ENCODE measurements at regions of chr10 and their contacts with region 1.

Region 1: DNA sequence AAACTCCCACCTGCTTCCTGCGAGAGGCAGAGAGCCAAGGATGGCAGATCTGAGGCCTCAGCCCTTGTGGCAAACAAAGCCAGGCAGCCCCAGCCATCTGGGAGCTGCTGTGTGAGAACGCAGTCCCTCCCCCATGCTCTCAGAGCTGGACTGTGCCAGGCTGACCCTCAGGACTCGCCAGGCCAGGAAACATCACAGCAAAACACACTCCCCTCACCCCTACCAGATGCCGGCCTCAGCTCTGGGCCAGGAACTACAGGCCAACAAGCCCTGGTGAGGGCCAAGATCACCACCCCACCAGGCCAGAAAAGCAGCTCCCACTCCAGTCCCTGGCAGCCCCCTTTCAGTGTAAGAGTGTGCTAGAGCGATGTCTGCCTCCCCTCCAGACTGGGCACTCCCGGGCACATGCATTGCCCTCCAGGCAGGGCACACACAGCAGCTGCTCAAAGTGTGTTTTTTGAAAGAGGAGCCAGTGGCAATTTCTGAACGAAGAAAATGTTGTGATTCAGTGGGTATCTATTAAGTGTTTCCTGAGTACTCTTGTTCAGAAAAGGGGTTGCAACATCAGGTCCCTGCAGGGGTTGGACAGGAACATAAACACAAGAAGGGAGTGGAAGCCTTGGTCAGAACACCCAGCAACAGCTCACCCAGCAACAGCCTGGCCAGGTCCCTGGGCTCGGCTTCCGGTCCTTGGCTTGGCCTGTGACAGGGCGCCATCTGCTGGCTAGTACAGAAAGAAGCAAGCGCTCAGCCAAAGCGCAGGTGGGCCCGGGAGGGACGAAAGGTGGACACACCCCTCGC is 18.3 kb downstream of the LRRC20 start:
- DNase-seq: peak; percentile 94 to 97
- H3K4me3 ChIP-seq: no peak overlapping the region
- H3K4me3 Mint-ChIP-seq: no peak overlapping the region
- H3K27ac Mint-ChIP-seq: peak overlapping the region; percentile 33
- H3K4me1 ChIP-seq: peaks cover 16% of the 10 kb centered on the region
- H3K4me1 Mint-ChIP-seq: peaks cover 28% of the 10 kb centered on the region
- H3K27me3 ChIP-seq: no peaks in the 10 kb centered on the region
- H3K27me3 Mint-ChIP-seq: no peaks in the 10 kb centered on the region
- CTCF ChIP-seq: peak; percentile 98 to 99

Region 2: DNA sequence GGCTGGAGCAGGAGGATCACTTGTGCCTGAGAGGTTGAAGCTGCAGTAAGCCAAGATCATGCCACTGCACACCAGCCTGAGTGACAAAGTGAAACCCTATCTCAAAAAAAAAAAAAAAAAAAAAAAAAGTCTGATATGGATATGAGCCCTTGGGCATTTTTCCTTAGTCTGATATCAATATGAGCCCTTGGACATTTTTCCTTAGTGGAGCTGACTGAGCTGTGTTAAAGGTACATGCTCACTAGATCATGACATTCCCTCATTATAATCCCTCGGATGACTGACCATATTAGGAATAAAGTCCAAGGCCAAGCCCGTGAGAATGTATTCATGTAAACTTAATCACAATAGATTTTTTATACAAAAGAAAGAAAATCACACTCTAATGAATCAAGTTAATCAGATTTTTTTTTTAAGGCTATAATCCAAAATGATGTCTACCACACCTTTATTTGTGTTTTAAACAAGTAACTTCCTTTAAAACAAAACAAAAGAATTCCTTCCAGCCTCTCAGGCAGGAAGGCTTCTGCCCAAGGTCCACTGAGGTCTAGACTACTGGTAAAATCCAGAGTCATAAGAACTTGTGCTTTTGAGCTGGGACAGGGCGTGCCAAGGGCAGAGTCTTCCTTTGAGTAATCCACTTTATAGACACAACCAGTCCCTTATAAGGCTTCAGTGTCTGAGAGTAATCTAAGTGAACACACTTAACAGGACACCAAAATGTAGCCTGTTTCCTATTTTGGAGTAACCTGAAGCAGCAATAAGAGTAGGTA is 136.4 kb before region 1 on chr10:
- CTCF ChIA-PET with region 1: interaction called, 284 read pairs
- POLR2A ChIA-PET with region 1: interaction called, 5 read pairs
- intact Hi-C with region 1: no loop called
- DNase-seq: no peak
- H3K4me3 ChIP-seq: no peak overlapping the region
- H3K4me3 Mint-ChIP-seq: no peak overlapping the region
- H3K27ac Mint-ChIP-seq: no peak overlapping the region
- H3K4me1 ChIP-seq: peaks cover 16% of the 10 kb centered on the region
- H3K4me1 Mint-ChIP-seq: peaks cover 19% of the 10 kb centered on the region
- H3K27me3 ChIP-seq: no peaks in the 10 kb centered on the region
- H3K27me3 Mint-ChIP-seq: no peaks in the 10 kb centered on the region
- CTCF ChIP-seq: no peak

Region 3: GRCh38 chr10:70233109-70233938 is 130.8 kb before region 1 on chr10 and contains the start of gene PPA1:
- CTCF ChIA-PET with region 1: interaction called, 36 read pairs
- POLR2A ChIA-PET with region 1: interaction called, 6 read pairs
- intact Hi-C with region 1: loop called (anchors 1 kb)
- DNase-seq: peak; percentile 99 to 100
- H3K4me3 ChIP-seq: peak within 1 kb of the TSS; percentile 85
- H3K4me3 Mint-ChIP-seq: peak within 1 kb of the TSS; percentile 76
- H3K27ac Mint-ChIP-seq: peak within 1 kb of the TSS; percentile 99
- H3K4me1 ChIP-seq: peaks cover 19% of the 10 kb centered on the region
- H3K4me1 Mint-ChIP-seq: peaks cover 19% of the 10 kb centered on the region
- H3K27me3 ChIP-seq: no peaks in the 10 kb centered on the region
- H3K27me3 Mint-ChIP-seq: no peaks in the 10 kb centered on the region
- CTCF ChIP-seq: peak; percentile 56 to 81
- total RNA-seq, gene PPA1: 350 and 353 TPM in 2 replicates

Region 4: GRCh38 chr10:70272925-70273316 is 91.2 kb before region 1 on chr10:
- CTCF ChIA-PET with region 1: interaction called, 25 read pairs
- POLR2A ChIA-PET with region 1: no interaction called
- intact Hi-C with region 1: no loop called
- DNase-seq: no peak
- H3K4me3 ChIP-seq: no peak overlapping the region
- H3K4me3 Mint-ChIP-seq: no peak overlapping the region
- H3K27ac Mint-ChIP-seq: no peak overlapping the region
- H3K4me1 ChIP-seq: no peaks in the 10 kb centered on the region; the same call in 1 of the 2 replicates
- H3K4me1 Mint-ChIP-seq: no peaks in the 10 kb centered on the region
- H3K27me3 ChIP-seq: no peaks in the 10 kb centered on the region; the same call in 1 of the 2 replicates
- H3K27me3 Mint-ChIP-seq: no peaks in the 10 kb centered on the region
- CTCF ChIP-seq: peak; percentile 50 to 68

Region 5: GRCh38 chr10:70324339-70324861 is 39.8 kb before region 1 on chr10:
- CTCF ChIA-PET with region 1: interaction called, 28 read pairs
- POLR2A ChIA-PET with region 1: no interaction called
- intact Hi-C with region 1: loop called (anchors 1 kb)
- DNase-seq: peak in 1 of 2 experiments; percentile 31
- H3K4me3 ChIP-seq: no peak overlapping the region
- H3K4me3 Mint-ChIP-seq: no peak overlapping the region
- H3K27ac Mint-ChIP-seq: peak overlapping the region; percentile 24
- H3K4me1 ChIP-seq: peaks cover 22% of the 10 kb centered on the region
- H3K4me1 Mint-ChIP-seq: peaks cover 21% of the 10 kb centered on the region
- H3K27me3 ChIP-seq: no peaks in the 10 kb centered on the region
- H3K27me3 Mint-ChIP-seq: no peaks in the 10 kb centered on the region
- CTCF ChIP-seq: no peak

Region 6: GRCh38 chr10:70331486-70332268 is 32.5 kb before region 1 on chr10:
- CTCF ChIA-PET with region 1: interaction called, 7 read pairs
- POLR2A ChIA-PET with region 1: no interaction called
- intact Hi-C with region 1: loop called (anchors 1 kb)
- DNase-seq: peak in 1 of 2 experiments; percentile 30
- H3K4me3 ChIP-seq: no peak overlapping the region
- H3K4me3 Mint-ChIP-seq: no peak overlapping the region
- H3K27ac Mint-ChIP-seq: no peak overlapping the region
- H3K4me1 ChIP-seq: no peaks in the 10 kb centered on the region
- H3K4me1 Mint-ChIP-seq: peaks cover under 1% of the 10 kb centered on the region
- H3K27me3 ChIP-seq: no peaks in the 10 kb centered on the region
- H3K27me3 Mint-ChIP-seq: no peaks in the 10 kb centered on the region
- CTCF ChIP-seq: peak; percentile 32 to 38

Region 7: GRCh38 chr10:70391654-70392053 is 27.5 kb after region 1 on chr10:
- CTCF ChIA-PET with region 1: interaction called, 48 read pairs
- POLR2A ChIA-PET with region 1: interaction called, 4 read pairs
- intact Hi-C with region 1: loop called (anchors 1 kb)
- DNase-seq: no peak
- H3K4me3 ChIP-seq: no peak overlapping the region
- H3K4me3 Mint-ChIP-seq: no peak overlapping the region
- H3K27ac Mint-ChIP-seq: no peak overlapping the region
- H3K4me1 ChIP-seq: peaks cover 4% of the 10 kb centered on the region; the same call in 1 of the 2 replicates
- H3K4me1 Mint-ChIP-seq: peaks cover 24% of the 10 kb centered on the region
- H3K27me3 ChIP-seq: no peaks in the 10 kb centered on the region
- H3K27me3 Mint-ChIP-seq: no peaks in the 10 kb centered on the region
- CTCF ChIP-seq: no peak